GM13976 (cell line): ENCODE measurements at regions of chr6 and their contacts with region 1.

Region 1: GRCh38 chr6:33768644-33769120 is 20.2 kb downstream of the LEMD2 start:
- DNase-seq: peak; percentile 85
- CTCF ChIP-seq: peak; percentile 74

Region 2: DNA sequence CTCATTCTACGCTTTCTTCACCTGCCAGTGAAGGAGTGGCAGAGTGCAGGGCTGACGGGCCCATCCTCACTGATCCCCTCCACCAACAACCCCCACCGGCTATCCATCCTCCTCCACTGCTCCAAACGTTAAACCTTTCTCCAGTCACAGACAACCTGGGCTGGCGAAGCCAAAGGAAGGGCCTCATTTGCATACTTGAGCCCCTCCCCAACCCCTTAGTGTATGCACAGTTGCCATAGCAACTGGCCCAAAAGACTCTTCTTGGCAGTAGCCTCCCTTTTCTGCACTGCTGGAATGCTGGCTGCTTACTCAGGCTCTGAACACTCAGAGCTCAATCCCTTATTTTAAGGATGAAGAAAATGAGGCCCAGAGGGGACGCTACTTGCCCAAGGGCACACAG is 246.9 kb after region 1 on chr6:
- in situ Hi-C with region 1: no loop called
- DNase-seq: no peak
- CTCF ChIP-seq: no peak

Region 3: GRCh38 chr6:34145161-34146020 is 376.7 kb after region 1 on chr6:
- in situ Hi-C with region 1: loop called (anchors 10 kb)
- DNase-seq: no peak
- CTCF ChIP-seq: no peak